Heart left ventricle (tissue), 16 donors: ENCODE measurements at regions of chr19 and their contacts with region 1.

Region 1: GRCh38 chr19:33373701-33374421 is at the start of gene CEBPG:
- DNase-seq: peak; percentile 62 to 82 (median 63)
- ATAC-seq: peak in 3 of 4 donors; percentile 40 to 48 (median 44)
- H3K4me3 ChIP-seq: peak within 1 kb of the TSS; percentile 67 to 99 (median 87)
- H3K27ac ChIP-seq: peak within 1 kb of the TSS; percentile 91 to 100 (median 98)
- H3K4me1 ChIP-seq: peaks cover 4 to 59% (median 28%) of the 10 kb centered on the region in 12 donors
- H3K27me3 ChIP-seq: no peaks in the 10 kb centered on the region
- CTCF ChIP-seq: peak in 6 of 12 donors; percentile 18 to 47 (median 37)
- POLR2A ChIP-seq: peak; percentile 61 to 94
- total RNA-seq, gene CEBPG: 11.8 to 18.3 (median 14.7) TPM

Region 2: GRCh38 chr19:33394006-33394849 is 20.4 kb after region 1 on chr19:
- intact Hi-C with region 1: loop called in 2 of 10 experiments (anchors 2 kb)
- DNase-seq: peak in 3 of 5 donors; percentile 57 to 73 (median 70)
- ATAC-seq: peak in 2 of 4 donors; percentile 41
- H3K4me3 ChIP-seq: no peak overlapping the region
- H3K27ac ChIP-seq: peak overlapping the region in 8 of 12 donors; percentile 1 to 44 (median 15)
- H3K4me1 ChIP-seq: peaks cover 4 to 87% (median 69%) of the 10 kb centered on the region in 12 donors
- H3K27me3 ChIP-seq: no peaks in the 10 kb centered on the region
- CTCF ChIP-seq: no peak
- POLR2A ChIP-seq: no peak